MCF 10A (cell line): ENCODE measurements at regions of chr5 and their contacts with region 1.

Region 1: GRCh38 chr5:147113967-147114366 is 120.9 kb upstream of the STK32A start:
- DNase-seq: no peak
- H3K4me3 Mint-ChIP-seq: no peak overlapping the region
- H3K27ac Mint-ChIP-seq: no peak overlapping the region
- H3K4me1 Mint-ChIP-seq: no peaks in the 10 kb centered on the region
- H3K27me3 Mint-ChIP-seq: no peaks in the 10 kb centered on the region
- CTCF ChIP-seq: no peak

Region 2: DNA sequence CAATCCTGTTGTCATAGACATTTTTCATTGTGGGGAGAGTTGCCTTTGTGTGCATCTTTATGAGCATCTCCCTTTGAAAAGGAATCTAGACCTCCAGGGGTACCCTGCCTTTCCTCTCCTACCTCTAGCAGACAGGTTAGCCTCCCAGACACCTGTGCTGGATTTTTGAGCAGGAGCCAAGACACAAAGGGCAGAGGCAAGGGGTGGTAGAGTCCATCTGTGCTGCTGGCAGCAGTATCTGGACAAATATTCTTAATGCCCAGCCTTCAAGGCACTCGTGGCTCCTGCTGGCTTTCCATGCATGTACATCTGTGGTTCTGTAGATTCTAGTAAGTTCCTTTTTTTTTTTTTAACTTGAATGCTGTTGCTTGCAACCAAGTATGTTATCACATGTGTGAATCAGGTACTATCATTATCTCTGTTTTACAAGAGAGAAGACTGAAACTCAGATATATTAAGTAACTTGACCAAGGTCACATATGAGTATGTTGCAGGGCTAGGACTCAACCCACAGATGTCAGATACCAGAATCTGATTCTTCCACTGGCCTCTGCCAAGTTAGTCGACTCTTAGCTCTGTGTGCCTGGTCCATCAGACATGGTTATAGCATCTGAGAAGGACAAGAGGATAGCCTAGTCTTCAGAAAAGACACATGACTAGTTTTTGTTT is 565.1 kb before region 1 on chr5:
- CTCF ChIA-PET with region 1: no interaction called
- POLR2A ChIA-PET with region 1: no interaction called
- intact Hi-C with region 1: no loop called
- DNase-seq: no peak
- H3K4me3 Mint-ChIP-seq: no peak overlapping the region
- H3K27ac Mint-ChIP-seq: no peak overlapping the region
- H3K4me1 Mint-ChIP-seq: no peaks in the 10 kb centered on the region
- H3K27me3 Mint-ChIP-seq: peaks cover 69% of the 10 kb centered on the region
- CTCF ChIP-seq: no peak

Region 3: DNA sequence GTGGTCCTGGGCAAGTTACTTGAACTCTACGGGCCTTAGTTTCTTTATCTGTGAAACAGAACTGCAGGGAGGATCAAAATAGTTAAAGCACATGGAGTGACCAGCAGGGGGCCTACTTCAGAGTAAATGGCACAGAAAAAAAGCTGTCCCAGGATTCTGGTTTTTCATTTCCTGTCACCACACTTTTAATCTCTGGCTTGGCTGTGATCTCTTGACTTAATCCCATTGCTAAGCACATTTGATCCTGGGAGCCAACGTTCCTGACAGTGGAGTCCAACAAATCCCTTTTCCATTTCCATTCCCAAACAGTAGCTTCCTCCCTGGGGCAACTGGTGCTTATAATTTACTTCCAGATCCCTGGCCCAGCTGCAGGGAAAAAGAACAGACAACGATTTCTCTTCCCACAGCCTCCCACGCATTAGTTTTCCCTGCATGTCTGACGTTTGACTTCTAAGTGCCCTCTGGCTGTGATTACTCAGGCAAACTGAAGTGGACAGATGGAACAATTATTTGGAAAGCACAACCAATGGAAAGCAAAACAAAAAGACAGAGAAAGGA is 15.7 kb before region 1 on chr5:
- CTCF ChIA-PET with region 1: interaction called, 10 read pairs
- POLR2A ChIA-PET with region 1: no interaction called
- intact Hi-C with region 1: no loop called
- DNase-seq: peak; percentile 69
- H3K4me3 Mint-ChIP-seq: no peak overlapping the region
- H3K27ac Mint-ChIP-seq: peak overlapping the region; percentile 7
- H3K4me1 Mint-ChIP-seq: peaks cover 13% of the 10 kb centered on the region
- H3K27me3 Mint-ChIP-seq: no peaks in the 10 kb centered on the region
- CTCF ChIP-seq: peak; percentile 61